Activated CD4-positive, alpha-beta T cell treated with anti-CD3 and anti-CD28 coated beads, Interleukin-2, amount 10 ng/mL, durations not matched to agents 24 days and 14 days (primary cell): ENCODE measurements at regions of chr6 and their contacts with region 1.

Region 1: GRCh38 chr6:42402184-42402583 is 49.5 kb downstream of the TRERF1 start:
- DNase-seq: peak; percentile 84
- H3K4me3 Mint-ChIP-seq: peak overlapping the region; percentile 49
- H3K27ac Mint-ChIP-seq: peak overlapping the region; percentile 84
- H3K4me1 Mint-ChIP-seq: peaks cover 61% of the 10 kb centered on the region
- H3K27me3 Mint-ChIP-seq: no peaks in the 10 kb centered on the region

Region 2: DNA sequence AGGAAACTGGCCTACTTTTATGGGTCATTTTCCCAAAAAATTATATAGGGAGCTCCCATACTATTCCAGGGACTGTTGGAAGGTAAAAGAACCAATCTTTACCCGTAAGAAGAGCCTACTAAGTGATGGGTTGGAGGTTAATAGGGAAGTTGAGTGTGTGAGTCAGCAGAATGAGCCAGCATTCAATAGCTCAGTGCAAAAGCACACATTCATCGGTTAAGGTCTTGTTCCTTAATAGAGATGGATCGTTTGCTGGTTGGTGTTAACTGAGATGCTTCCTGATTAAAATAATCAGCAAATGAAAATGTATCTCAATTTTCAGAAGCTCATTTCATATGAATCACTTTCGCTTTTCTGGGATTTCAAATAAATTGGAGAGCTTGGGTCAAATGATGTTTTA is 69.3 kb before region 1 on chr6:
- intact Hi-C with region 1: no loop called
- DNase-seq: no peak
- H3K4me3 Mint-ChIP-seq: no peak overlapping the region
- H3K27ac Mint-ChIP-seq: peak overlapping the region; percentile 49
- H3K4me1 Mint-ChIP-seq: peaks cover 38% of the 10 kb centered on the region
- H3K27me3 Mint-ChIP-seq: no peaks in the 10 kb centered on the region

Region 3: GRCh38 chr6:42423244-42423643 is 21.1 kb after region 1 on chr6:
- intact Hi-C with region 1: loop called (anchors 2 kb)
- DNase-seq: peak; percentile 72
- H3K4me3 Mint-ChIP-seq: peak overlapping the region; percentile 52
- H3K27ac Mint-ChIP-seq: peak overlapping the region; percentile 10
- H3K4me1 Mint-ChIP-seq: peaks cover 50% of the 10 kb centered on the region
- H3K27me3 Mint-ChIP-seq: no peaks in the 10 kb centered on the region

Region 4: DNA sequence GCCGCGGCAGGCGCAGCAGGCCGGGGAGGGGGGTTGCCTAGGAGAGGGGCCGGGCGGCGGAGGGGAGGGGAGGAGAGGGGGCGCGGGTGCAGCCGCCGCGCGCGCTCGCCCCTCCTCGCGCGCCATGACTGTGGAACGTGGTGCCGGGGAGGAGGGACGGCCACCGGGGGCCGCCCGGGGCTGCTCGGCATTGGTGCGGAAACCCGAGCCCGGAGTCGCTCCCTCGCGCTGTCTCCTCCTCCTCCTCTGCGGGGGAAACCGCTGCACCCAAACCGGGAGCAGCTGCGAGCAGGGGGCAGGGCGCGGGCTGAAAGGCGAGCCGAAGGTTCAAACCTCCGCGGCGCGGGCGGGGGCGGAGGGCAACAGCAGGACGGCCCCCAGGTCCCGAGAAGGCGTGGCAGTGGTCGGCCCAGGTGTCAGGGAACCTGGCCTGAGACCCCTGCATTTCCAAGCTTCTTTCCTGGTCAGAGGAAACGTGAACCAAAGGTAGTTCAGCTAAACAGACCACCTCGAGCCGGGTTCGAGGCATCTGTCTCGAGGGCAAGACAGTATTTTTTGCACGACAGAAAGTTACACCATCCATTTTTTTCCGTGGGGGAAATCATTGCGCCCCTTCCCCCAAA is 51.0 kb after region 1 on chr6:
- intact Hi-C with region 1: no loop called
- DNase-seq: peak; percentile 94
- H3K4me3 Mint-ChIP-seq: peak overlapping the region; percentile 99
- H3K27ac Mint-ChIP-seq: peak overlapping the region; percentile 93
- H3K4me1 Mint-ChIP-seq: peaks cover 35% of the 10 kb centered on the region
- H3K27me3 Mint-ChIP-seq: peaks cover 11% of the 10 kb centered on the region